GM12878 (cell line): ENCODE measurements at regions of chr2 and their contacts with region 1.

Region 1: GRCh38 chr2:165499131-165499530 is 29.6 kb downstream of the CSRNP3 start:
- DNase-seq: no peak
- ATAC-seq: no peak
- H3K4me3 ChIP-seq: no peak overlapping the region
- H3K27ac ChIP-seq: no peak overlapping the region
- H3K4me1 ChIP-seq: no peaks in the 10 kb centered on the region
- H3K27me3 ChIP-seq: no peaks in the 10 kb centered on the region
- CTCF ChIP-seq: no peak
- EP300 ChIP-seq: no peak
- POLR2A ChIP-seq: no peak
- RAD21 ChIP-seq: no peak

Region 2: DNA sequence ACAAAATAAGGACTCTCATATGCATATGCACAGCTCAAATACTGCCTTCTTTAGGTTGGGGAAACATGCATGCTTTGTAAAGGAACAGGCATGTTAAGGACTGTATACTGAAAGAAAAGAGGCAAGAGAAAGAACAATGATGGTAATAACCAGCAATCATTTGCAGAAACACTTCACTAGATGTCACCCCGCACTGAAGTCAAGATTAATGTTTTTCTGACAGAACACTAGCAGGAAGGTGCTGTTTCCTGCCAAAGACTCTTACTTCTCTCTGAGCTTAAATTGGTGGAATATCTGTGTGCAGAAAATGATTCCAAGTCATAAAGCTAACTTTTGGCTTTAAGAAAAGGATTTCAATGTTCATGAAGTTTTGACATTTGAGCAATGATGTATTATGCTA is 49.0 kb before region 1 on chr2:
- CTCF ChIA-PET with region 1: interaction called, 6 read pairs
- POLR2A ChIA-PET with region 1: no interaction called
- RAD21 ChIA-PET with region 1: interaction called, 11 read pairs
- SMC1A ChIA-PET with region 1: interaction called, 9 read pairs
- in situ Hi-C with region 1: no loop called
- intact Hi-C with region 1: no loop called
- DNase-seq: no peak
- ATAC-seq: peak; percentile 59
- H3K4me3 ChIP-seq: no peak overlapping the region
- H3K27ac ChIP-seq: no peak overlapping the region
- H3K4me1 ChIP-seq: no peaks in the 10 kb centered on the region
- H3K27me3 ChIP-seq: no peaks in the 10 kb centered on the region
- CTCF ChIP-seq: no peak; a peak in 1 of 6 replicates
- EP300 ChIP-seq: no peak
- POLR2A ChIP-seq: no peak
- RAD21 ChIP-seq: no peak

Region 3: DNA sequence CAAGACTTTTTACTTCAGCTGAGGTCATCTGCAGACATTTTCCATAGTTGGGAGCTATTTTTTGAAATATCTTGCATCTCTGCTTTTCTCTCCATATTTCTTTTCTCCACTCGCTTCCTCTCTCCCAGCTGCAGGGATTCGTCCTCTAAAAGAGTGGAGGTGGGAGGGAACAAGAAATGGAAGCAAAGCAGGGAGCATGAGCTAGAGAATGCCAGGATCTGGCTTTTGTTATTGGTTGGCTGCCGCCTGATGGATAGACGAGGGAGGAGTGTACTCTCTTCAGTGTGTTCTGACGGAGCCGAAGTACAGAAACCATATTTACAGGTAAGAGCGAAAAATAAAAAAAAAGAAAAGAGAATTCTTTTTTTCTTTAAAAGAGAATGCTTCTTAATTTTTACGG is 29.7 kb before region 1 on chr2 and contains the start of gene CSRNP3:
- CTCF ChIA-PET with region 1: interaction called, 8 read pairs
- POLR2A ChIA-PET with region 1: interaction called, 4 read pairs
- RAD21 ChIA-PET with region 1: interaction called, 7 read pairs
- SMC1A ChIA-PET with region 1: interaction called, 16 read pairs
- in situ Hi-C with region 1: no loop called
- intact Hi-C with region 1: no loop called
- DNase-seq: no peak
- ATAC-seq: peak; percentile 45; the same call in 2 of the 3 replicates
- H3K4me3 ChIP-seq: no peak within 1 kb of the TSS
- H3K27ac ChIP-seq: no peak within 1 kb of the TSS
- H3K4me1 ChIP-seq: no peaks in the 10 kb centered on the region
- H3K27me3 ChIP-seq: no peaks in the 10 kb centered on the region
- CTCF ChIP-seq: no peak
- EP300 ChIP-seq: no peak
- POLR2A ChIP-seq: no peak
- RAD21 ChIP-seq: no peak
- polyA plus RNA-seq, gene CSRNP3: 0.11 TPM in 1 of 2 experiments, not detected in the other

Region 4: DNA sequence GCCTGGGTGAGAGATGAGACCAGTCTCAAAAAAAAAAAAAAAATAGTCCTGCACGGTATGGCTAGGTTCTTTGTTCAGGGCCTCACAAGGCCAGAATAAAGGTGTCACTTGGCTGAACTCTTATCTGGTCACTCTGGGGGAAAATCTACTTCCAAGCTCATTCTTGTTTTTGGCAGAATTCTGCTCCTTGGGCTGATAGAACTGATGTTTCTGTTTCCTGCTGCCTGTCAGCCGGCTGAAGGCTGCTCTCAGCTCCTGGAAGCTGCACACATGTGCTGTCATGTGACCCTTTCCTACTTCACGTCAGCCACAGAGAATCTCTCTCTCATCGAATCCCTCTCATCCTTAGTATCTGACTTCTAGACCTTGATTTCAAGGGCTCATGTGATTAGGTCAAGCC is 19.3 kb before region 1 on chr2:
- CTCF ChIA-PET with region 1: interaction called, 8 read pairs
- POLR2A ChIA-PET with region 1: interaction called, 3 read pairs
- RAD21 ChIA-PET with region 1: interaction called, 7 read pairs
- SMC1A ChIA-PET with region 1: interaction called, 13 read pairs
- in situ Hi-C with region 1: no loop called
- intact Hi-C with region 1: no loop called
- DNase-seq: no peak
- ATAC-seq: no peak; the same call in 2 of the 3 replicates
- H3K4me3 ChIP-seq: no peak overlapping the region
- H3K27ac ChIP-seq: no peak overlapping the region
- H3K4me1 ChIP-seq: no peaks in the 10 kb centered on the region
- H3K27me3 ChIP-seq: no peaks in the 10 kb centered on the region
- CTCF ChIP-seq: no peak
- EP300 ChIP-seq: no peak
- POLR2A ChIP-seq: no peak
- RAD21 ChIP-seq: no peak

Region 5: GRCh38 chr2:165544897-165545296 is 45.8 kb after region 1 on chr2:
- CTCF ChIA-PET with region 1: no interaction called
- POLR2A ChIA-PET with region 1: no interaction called
- RAD21 ChIA-PET with region 1: interaction called, 3 read pairs
- SMC1A ChIA-PET with region 1: interaction called, 14 read pairs
- in situ Hi-C with region 1: no loop called
- intact Hi-C with region 1: no loop called
- DNase-seq: no peak
- ATAC-seq: peak; percentile 99
- H3K4me3 ChIP-seq: no peak overlapping the region
- H3K27ac ChIP-seq: no peak overlapping the region
- H3K4me1 ChIP-seq: no peaks in the 10 kb centered on the region
- H3K27me3 ChIP-seq: no peaks in the 10 kb centered on the region
- CTCF ChIP-seq: no peak
- EP300 ChIP-seq: peak; percentile 8 to 70; a peak in 1 of 4 replicates
- POLR2A ChIP-seq: no peak
- RAD21 ChIP-seq: no peak